ENCODE measurements at regions of chr21 and their contacts with region 1.

Region 1: DNA sequence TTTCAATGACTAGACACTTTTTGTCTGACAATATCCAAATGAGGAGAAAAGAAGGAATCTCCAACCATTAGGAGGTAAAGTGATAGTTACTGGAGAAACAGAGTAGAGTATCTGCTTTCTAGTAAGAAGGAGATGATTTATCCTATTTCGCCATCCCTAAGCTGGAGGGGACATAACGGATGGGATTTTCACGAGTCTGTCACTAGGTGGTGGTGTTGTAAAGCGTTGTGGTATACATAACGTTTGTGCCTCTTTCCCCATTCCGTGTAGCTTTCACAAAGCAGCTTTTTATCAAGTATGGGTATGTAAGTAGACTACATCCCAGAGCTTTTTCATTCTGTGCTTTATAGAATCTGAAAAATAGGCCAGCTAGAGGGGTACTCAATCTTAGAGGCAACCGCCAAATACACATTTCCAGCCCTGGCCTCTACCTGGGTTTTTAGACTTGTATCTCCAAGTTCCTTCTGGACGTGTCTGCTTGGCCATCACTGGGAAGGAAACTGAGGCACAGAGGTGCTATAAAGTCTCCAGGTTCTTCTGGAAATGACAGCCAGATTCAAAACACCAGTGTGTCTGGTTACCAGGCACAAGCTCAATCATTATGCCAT is 33.3 kb upstream of the FAM3B start:
- DNase-seq: no peak

Region 2: DNA sequence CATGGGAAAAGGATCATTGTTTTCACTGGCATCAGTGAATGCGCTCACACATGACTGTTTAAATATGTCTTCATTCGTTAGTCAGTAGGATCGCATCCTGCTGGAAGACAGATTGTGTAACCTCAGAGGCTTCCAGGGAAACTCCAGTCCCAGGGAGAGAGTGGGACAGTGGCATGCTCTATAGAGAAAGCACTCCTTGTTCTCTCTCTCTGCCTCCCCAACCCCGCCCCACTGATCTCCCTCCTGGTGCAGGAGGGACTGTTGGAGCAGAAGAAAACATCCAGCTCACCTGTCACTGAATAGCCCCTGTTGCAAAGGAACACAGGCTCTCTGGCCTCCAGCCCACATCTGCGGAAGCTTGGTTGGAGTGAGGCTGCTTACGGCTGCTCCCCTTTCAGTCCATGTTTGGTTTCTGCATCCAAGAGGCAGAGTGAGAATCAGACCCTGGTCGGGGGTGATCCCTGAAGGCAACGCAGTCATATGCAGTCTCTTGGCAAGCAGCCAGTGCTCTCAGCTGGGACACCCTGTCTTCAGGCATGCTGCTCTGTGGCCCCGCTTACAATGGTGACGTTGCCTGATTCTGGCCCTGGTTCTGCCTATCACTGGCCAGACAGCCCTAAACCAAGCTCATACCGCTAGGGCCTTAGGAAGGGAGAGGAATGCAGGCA is 75.8 kb before region 1 on chr21:
- intact Hi-C with region 1: no loop called
- DNase-seq: peak; percentile 91

Region 3: GRCh38 chr21:41460578-41461527 is 177.5 kb after region 1 on chr21:
- intact Hi-C with region 1: loop called (anchors 2 to 10 kb)
- DNase-seq: peak; percentile 93